Activated CD4-positive, alpha-beta T cell treated with anti-CD3 and anti-CD28 coated beads for 36 hours (primary cell): ENCODE measurements at regions of chr10 and their contacts with region 1.

Region 1: GRCh38 chr10:35341521-35341920 is 5.2 kb downstream of the CCNY start:
- DNase-seq: no peak
- ATAC-seq: peak; percentile 62
- H3K4me3 Mint-ChIP-seq: no peak overlapping the region
- H3K27ac Mint-ChIP-seq: peak overlapping the region; percentile 48
- H3K4me1 Mint-ChIP-seq: peaks cover 73% of the 10 kb centered on the region
- H3K27me3 Mint-ChIP-seq: no peaks in the 10 kb centered on the region

Region 2: DNA sequence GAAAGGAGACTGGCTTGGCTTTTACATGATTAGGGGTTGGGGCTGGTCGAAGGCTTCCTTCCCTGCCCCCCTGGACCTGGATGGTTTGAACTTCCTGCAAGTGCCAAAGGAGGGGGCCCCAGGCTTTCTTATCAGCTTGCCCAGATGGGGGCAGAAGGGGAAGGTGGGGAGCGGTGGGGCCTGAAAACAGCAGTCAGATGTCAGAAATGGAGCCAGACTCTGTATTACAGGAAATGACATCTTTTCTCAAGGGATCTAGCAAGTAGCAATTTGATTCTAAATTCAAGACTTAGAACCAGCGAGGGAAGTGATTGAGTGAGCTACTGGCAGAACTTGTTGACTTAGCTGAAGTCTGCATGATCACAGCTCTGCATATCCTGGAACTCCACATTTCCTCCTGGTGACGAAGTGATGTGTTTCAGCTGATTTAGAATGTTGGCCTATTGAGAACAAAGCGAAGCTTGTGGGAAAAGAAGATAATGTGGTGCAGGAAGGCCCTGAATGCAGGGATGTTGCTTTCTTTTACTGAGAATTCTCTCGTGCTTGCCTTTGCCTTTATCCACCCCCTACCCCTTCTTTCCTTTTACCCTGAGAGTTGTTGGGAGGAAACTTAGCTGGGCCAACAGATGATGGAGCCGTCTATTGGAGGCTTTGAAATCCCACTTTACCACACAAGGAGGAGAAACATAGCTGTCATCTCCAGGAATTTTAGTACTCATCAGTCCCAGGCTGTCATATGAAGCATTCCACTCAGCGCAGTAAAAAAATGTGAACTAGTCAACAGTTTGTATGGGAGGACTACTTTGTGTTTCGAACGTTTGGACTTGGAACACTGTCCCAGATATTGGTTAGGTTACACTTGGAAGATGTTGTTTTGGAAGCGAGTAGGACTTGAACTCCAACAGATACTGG is 38.0 kb after region 1 on chr10:
- CTCF ChIA-PET with region 1: interaction called, 3 read pairs
- POLR2A ChIA-PET with region 1: no interaction called
- intact Hi-C with region 1: loop called (anchors 1 to 2 kb)
- DNase-seq: peak; percentile 34
- ATAC-seq: peak; percentile 45
- H3K4me3 Mint-ChIP-seq: peak overlapping the region; percentile 28
- H3K27ac Mint-ChIP-seq: peak overlapping the region; percentile 88
- H3K4me1 Mint-ChIP-seq: peaks cover 66% of the 10 kb centered on the region
- H3K27me3 Mint-ChIP-seq: no peaks in the 10 kb centered on the region

Region 3: DNA sequence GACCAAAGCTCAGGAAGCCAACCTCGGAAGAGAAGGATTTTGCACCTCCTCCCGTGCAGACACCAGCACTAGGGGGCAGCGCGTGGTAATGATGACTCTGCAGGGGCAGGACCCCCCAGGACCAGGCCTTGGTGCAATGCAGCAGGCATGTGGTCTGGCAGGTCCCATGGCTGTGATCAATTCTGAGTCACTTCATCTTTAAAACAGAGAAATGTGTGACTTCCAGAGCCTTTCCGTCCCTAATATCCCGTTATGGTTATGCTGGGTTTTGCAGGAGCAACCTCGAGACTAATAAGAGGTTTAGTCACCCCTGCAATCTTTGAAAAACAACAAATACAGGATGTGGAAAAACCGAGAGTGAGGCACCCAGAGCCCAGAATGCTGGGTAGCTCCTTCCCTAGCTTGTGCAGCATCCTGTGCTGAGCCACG is 233.4 kb after region 1 on chr10:
- CTCF ChIA-PET with region 1: no interaction called
- POLR2A ChIA-PET with region 1: no interaction called
- intact Hi-C with region 1: no loop called
- DNase-seq: no peak
- ATAC-seq: no peak
- H3K4me3 Mint-ChIP-seq: no peak overlapping the region
- H3K27ac Mint-ChIP-seq: no peak overlapping the region
- H3K4me1 Mint-ChIP-seq: no peaks in the 10 kb centered on the region
- H3K27me3 Mint-ChIP-seq: no peaks in the 10 kb centered on the region